Activated naive CD4-positive, alpha-beta T cell treated with anti-CD3 and anti-CD28 coated beads, Interleukin-2, amount 10 ng/mL, durations not matched to agents 7 days and 5 days (primary cell): ENCODE measurements at regions of chr14 and their contacts with region 1.

Region 1: DNA sequence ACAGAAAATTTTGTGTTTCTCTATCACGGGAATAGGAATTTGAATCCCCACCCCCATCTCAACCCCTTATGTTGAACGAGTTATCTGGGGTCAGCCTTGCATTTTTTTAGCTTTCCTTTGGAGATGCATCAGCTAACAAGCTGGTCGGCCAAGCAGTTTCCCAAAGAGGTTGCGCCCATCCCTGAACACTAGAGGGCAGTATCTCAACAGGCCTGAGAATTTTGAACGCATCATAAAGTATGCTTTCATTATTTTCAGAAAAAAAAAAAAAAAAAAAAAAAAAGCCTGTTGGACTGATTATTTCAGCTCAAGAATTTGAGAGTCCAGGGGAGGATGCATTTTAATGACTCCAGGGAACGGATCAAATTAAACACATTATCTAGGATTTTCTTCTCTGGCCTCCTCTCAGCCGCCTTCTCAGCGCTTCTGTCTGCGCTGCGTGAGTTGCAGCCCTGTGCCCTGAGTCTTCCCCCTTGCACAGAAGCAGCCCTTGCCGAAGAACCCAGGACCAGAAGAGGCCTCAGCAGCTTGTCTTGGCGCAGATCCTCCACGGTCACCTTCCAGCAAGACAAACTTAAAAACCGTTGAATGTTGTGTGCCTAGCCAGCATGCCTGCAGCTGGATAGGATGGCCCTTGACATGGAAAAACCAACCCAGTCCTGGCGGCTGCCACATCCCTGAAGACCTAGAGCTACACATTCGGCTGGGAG is 76.6 kb upstream of the GZMB start:
- DNase-seq: peak; percentile 71
- H3K4me3 Mint-ChIP-seq: no peak overlapping the region
- H3K27ac Mint-ChIP-seq: no peak overlapping the region
- H3K4me1 Mint-ChIP-seq: peaks cover 3% of the 10 kb centered on the region
- H3K27me3 Mint-ChIP-seq: peaks cover 27% of the 10 kb centered on the region

Region 2: DNA sequence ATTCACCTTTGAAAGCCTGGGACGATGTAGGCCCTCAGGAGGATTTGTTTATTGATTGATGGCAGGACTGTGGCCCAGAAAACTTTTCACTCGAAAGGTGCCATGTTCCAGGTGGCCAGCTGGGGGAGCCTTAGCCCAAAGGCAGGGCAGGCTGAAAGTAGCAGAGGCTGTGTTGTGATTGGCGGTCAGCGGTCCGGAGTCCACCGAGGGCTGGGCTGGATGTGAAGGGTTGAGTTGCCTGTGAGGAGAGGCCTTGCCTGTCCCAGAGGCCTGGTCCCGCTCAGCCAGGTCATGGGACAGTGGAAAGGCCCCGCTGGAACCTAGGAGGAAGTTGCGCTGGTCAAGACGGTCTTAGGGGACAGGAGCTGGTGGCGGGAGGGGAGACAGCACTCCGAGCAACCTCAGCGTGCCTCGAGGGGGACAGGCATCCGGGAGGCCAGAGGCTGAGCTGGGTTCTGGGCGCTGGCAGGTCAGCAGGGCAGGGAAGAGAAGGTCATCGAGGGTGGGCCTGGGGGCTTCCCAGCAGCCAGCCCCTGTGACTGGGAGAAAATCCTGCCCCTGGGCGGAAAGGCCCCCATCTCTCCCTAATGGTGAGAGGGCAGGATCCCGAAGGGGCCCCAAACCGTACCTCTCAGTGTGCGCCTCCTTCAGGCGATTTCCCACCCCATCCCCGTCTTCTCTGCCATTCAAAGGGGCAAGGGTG is 228.8 kb before region 1 on chr14:
- CTCF ChIA-PET with region 1: interaction called, 13 read pairs
- DNase-seq: peak; percentile 69
- H3K4me3 Mint-ChIP-seq: peak overlapping the region; percentile 27
- H3K27ac Mint-ChIP-seq: peak overlapping the region; percentile 49
- H3K4me1 Mint-ChIP-seq: peaks cover 27% of the 10 kb centered on the region
- H3K27me3 Mint-ChIP-seq: peaks cover 5% of the 10 kb centered on the region

Region 3: DNA sequence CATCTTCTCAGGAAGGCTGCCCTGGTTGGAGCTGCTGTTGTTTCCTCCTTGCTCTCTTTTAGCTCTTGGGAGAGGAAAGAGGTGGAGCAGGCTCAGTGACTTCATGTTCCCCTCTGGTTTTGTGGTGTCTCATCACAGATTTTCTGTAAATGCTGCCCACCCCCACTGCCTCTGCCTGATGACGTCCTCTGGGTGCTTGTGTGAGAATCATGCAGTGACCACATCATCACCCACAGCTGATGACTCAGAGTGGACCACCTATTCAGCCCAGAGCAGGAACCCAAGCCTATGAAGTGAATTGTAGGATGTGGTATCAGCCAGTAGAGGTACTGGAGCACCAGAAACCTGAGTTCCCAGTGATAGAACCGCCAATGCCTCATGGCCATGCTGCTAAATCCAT is 76.4 kb before region 1 on chr14 and contains the start of gene GZMB:
- CTCF ChIA-PET with region 1: interaction called, 13 read pairs
- DNase-seq: peak; percentile 55
- H3K4me3 Mint-ChIP-seq: peak within 1 kb of the TSS; percentile 35
- H3K27ac Mint-ChIP-seq: peak within 1 kb of the TSS; percentile 12
- H3K4me1 Mint-ChIP-seq: peaks cover 17% of the 10 kb centered on the region
- H3K27me3 Mint-ChIP-seq: peaks cover 7% of the 10 kb centered on the region

Region 4: GRCh38 chr14:24695265-24696241 is 15.0 kb before region 1 on chr14:
- CTCF ChIA-PET with region 1: interaction called, 16 read pairs
- DNase-seq: no peak
- H3K4me3 Mint-ChIP-seq: no peak overlapping the region
- H3K27ac Mint-ChIP-seq: no peak overlapping the region
- H3K4me1 Mint-ChIP-seq: peaks cover 37% of the 10 kb centered on the region
- H3K27me3 Mint-ChIP-seq: peaks cover 2% of the 10 kb centered on the region

Region 5: DNA sequence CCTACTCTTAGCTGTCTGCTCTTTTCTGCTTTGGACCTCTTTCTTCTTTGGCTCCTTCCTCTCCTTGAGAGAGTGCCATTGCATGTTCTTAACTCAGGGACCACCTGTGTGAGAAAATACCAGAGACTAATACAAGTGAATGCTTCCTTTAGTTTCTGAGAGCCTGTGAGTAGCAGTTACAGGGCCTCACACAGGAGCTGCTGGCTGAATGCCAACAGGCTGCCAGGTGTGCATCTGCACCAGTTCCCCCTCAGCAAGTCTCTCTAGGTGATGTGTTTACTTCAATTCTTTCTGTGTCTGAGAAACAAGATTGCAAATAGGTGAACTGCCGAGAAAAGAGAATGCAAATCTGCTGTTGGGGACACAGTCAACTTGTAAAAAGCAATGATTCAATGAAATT is 231.2 kb after region 1 on chr14:
- CTCF ChIA-PET with region 1: no interaction called
- DNase-seq: no peak
- H3K4me3 Mint-ChIP-seq: no peak overlapping the region
- H3K27ac Mint-ChIP-seq: no peak overlapping the region
- H3K4me1 Mint-ChIP-seq: no peaks in the 10 kb centered on the region
- H3K27me3 Mint-ChIP-seq: no peaks in the 10 kb centered on the region

Region 6: DNA sequence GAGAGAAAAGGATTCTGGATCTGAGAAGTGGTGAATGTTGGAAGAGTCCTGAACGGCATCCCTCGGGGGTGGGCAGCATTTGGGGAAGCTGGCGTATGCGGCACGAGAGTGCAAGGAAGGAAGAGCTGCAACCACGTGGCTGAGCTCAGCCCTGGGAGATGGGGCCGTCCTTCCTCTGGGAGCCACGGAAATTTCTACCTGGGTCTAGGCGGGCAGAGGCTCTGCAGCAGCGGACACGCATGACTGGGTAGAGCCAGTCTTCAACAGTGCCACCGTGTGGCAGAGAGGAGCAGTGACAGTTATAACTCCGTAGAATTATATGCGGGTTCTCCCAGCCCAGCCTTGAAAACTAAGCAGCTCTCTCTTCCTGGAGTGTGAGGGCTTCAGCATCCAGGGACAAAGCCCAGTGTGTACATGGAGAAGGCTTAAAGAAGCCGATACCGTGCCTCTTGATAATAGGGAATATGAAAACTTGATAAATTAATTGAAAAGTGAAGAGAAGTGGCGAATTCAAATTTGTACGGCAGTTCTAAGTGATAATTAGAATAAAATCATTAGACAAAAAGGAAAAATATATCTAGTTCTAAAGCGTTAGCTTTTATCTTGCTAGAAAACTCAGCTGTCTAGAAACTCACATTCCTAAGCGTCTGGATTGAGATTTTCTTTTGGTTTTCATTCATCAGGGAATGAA is 422.3 kb after region 1 on chr14:
- CTCF ChIA-PET with region 1: interaction called, 34 read pairs
- DNase-seq: peak; percentile 60
- H3K4me3 Mint-ChIP-seq: no peak overlapping the region
- H3K27ac Mint-ChIP-seq: no peak overlapping the region
- H3K4me1 Mint-ChIP-seq: peaks cover 3% of the 10 kb centered on the region
- H3K27me3 Mint-ChIP-seq: peaks cover 12% of the 10 kb centered on the region